Activated T-helper 2 cell treated with anti-CD3 and anti-CD28 coated beads, Interferon-gamma antibody, Interleukin-2, Interleukin-4, amounts not matched to agents 10 μg/mL and 5 μg/mL and 100 μg/mL, durations not matched to agents 14 hours and 24 hours and 36 hours (primary cell): ENCODE measurements at regions of chr12 and their contacts with region 1.

Region 1: DNA sequence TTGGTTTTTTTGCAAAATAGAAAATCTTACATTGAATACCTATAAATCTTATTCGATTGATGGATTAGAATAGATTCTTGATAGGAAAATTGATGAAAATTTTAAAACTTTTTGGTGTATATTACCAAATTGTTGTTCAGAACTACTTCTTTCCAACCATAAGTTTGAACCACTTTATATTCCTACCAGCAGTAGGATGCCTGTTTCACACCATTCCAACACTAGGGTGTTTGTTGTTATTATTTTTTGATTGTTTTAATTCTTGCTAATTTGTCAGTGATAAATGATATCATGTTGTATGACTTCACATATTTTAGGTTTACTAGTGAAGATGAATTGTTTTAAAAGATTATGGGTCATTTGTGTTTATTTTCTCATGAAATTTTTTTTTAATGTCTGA is 43.4 kb downstream of the UTP20 start:
- DNase-seq: no peak
- H3K4me3 Mint-ChIP-seq: no peak overlapping the region
- H3K27ac Mint-ChIP-seq: no peak overlapping the region
- H3K4me1 Mint-ChIP-seq: no peaks in the 10 kb centered on the region
- H3K27me3 Mint-ChIP-seq: no peaks in the 10 kb centered on the region

Region 2: GRCh38 chr12:100827901-100828520 is 495.2 kb before region 1 on chr12:
- intact Hi-C with region 1: loop called (anchors 10 kb)
- DNase-seq: no peak
- H3K4me3 Mint-ChIP-seq: no peak overlapping the region
- H3K27ac Mint-ChIP-seq: no peak overlapping the region
- H3K4me1 Mint-ChIP-seq: no peaks in the 10 kb centered on the region
- H3K27me3 Mint-ChIP-seq: no peaks in the 10 kb centered on the region

Region 3: GRCh38 chr12:101305226-101305779 is 18.0 kb before region 1 on chr12:
- intact Hi-C with region 1: no loop called
- DNase-seq: no peak
- H3K4me3 Mint-ChIP-seq: no peak overlapping the region
- H3K27ac Mint-ChIP-seq: no peak overlapping the region
- H3K4me1 Mint-ChIP-seq: no peaks in the 10 kb centered on the region
- H3K27me3 Mint-ChIP-seq: no peaks in the 10 kb centered on the region